K562 (cell line): ENCODE measurements at regions of chr7 and their contacts with region 1.

Region 1: DNA sequence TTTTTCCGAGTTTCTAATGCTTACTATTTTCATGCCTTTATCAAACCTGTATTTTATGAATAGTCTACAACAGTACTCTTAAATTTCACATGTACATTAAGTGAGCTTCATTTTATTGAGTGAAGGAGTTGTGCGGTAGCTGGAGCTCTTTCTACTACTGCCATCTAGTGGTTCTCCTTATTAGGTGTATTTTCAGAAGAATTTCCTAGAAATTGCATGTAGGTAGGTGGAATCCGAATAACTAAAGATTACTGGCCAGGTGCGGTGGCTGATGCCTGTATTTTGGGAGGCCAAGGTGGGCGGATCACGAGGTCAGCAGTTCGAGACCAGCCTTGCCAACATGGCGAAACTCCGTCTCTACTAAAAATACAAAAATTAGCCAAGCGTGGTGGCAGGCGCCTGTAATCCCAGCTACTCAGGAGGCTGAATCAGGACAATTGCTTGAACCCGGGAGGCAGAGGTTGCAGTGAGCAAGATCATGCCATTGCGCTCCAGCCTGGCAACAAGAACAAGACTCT is 38.3 kb downstream of the LRRC72 start:
- DNase-seq: peak; percentile 47 to 71 (median 58)
- ATAC-seq: peak; percentile 84
- H3K4me3 ChIP-seq: no peak overlapping the region
- H3K27ac ChIP-seq: no peak overlapping the region
- H3K4me1 ChIP-seq: no peaks in the 10 kb centered on the region; a peak in 2 of 5 replicates
- H3K27me3 ChIP-seq: no peaks in the 10 kb centered on the region
- CTCF ChIP-seq: peak; percentile 62 to 86 (median 68); a peak in 5 of 6 replicates
- EP300 ChIP-seq: no peak
- POLR2A ChIP-seq: no peak
- RAD21 ChIP-seq: peak; percentile 94 to 98

Region 2: DNA sequence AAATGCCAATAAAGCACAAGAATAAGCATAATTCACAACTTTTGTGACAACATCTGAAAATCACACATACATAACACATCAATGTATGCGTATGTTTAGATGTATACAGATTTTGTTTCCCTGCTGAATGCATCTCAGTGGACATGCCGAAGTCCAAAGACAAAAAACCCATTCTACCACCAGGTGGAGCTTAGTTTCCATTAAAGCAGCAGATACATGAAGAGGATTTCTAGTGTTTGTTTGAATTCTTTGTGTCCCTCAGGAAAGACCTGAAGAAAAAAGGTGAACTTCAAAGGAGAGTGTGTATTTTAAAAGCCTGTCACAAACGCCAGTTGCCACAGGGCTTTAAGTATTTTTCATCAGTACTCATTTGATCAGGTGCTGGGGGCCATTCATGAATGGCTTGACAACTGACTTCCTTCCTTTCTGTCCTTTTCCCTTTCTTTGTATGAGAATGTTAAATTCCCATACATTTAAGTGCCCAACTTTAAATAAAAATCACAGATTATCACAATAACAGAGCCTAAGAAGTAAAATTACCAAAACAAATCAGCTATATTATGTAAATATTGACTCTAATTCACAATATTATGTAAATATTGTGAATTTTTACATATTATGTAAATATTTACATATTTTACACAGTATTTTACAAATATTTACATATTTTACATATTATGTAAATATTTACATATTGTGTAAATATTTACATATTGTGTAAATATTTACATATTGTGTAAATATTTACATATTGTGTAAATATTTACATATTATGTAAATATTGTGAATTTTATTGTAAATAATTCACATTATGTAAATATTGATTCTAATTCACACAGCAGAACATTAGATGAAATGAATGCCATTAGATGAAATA is 486.7 kb before region 1 on chr7:
- CTCF ChIA-PET with region 1: interaction called, 15 read pairs
- POLR2A ChIA-PET with region 1: no interaction called
- in situ Hi-C with region 1: loop called (anchors 25 kb)
- intact Hi-C with region 1: loop called (anchors 1 kb)
- DNase-seq: peak; percentile 35 to 83 (median 40)
- ATAC-seq: peak; percentile 94
- H3K4me3 ChIP-seq: no peak overlapping the region
- H3K27ac ChIP-seq: no peak overlapping the region
- H3K4me1 ChIP-seq: no peaks in the 10 kb centered on the region; a peak in 1 of 5 replicates
- H3K27me3 ChIP-seq: no peaks in the 10 kb centered on the region
- CTCF ChIP-seq: peak; percentile 60 to 77 (median 74); a peak in 5 of 6 replicates
- EP300 ChIP-seq: no peak
- POLR2A ChIP-seq: no peak
- RAD21 ChIP-seq: peak; percentile 92 to 95

Region 3: DNA sequence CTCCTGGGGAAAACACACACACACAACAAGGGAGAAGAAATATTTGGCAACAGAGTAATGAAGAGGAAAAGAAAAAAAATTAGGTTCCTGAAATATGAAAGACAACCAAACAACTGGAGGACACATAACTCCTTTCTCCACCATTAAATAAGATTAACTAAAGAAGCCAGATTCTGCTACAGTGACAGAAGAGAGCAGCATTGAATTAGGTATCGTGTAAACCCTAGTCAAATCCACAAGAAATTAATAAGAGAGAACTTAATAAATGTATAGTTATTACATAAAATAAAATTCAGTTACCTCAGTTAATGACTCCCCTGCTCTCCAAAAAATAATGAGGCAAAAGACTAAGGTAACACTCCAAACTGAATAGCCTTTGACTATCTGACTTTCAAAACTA is 450.3 kb before region 1 on chr7:
- CTCF ChIA-PET with region 1: interaction called, 10 read pairs
- POLR2A ChIA-PET with region 1: no interaction called
- in situ Hi-C with region 1: no loop called
- intact Hi-C with region 1: loop called (anchors 1 kb)
- DNase-seq: peak in 2 of 4 experiments; percentile 23 to 58
- ATAC-seq: peak; percentile 83
- H3K4me3 ChIP-seq: no peak overlapping the region
- H3K27ac ChIP-seq: no peak overlapping the region; the same call in 2 of the 3 replicates
- H3K4me1 ChIP-seq: no peaks in the 10 kb centered on the region
- H3K27me3 ChIP-seq: no peaks in the 10 kb centered on the region
- CTCF ChIP-seq: peak in 2 of 3 experiments; percentile 42 to 60; a peak in 3 of 6 replicates
- EP300 ChIP-seq: no peak
- POLR2A ChIP-seq: no peak
- RAD21 ChIP-seq: peak; percentile 51 to 78

Region 4: DNA sequence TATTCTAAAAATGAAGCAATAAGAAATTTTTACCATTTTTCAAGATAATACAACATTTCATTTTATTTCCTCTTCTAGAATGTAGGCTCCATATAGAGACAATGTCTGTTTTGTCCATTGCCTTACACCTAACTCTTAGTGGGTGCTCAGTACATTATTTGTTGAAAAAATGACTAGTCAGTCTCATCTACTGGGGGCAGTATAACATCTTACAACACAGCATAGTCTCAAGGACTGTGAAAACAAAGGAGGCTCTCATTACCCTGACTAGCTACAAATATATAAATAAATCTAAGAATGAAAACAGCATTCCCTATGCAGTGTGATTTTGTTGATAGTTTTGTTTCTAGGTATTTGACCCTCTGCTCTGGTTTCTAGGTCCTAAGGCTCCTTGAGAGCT is 155.2 kb before region 1 on chr7:
- CTCF ChIA-PET with region 1: no interaction called
- POLR2A ChIA-PET with region 1: interaction called, 3 read pairs
- in situ Hi-C with region 1: no loop called
- intact Hi-C with region 1: loop called (anchors 1 kb)
- DNase-seq: no peak
- ATAC-seq: peak; percentile 85
- H3K4me3 ChIP-seq: no peak overlapping the region
- H3K27ac ChIP-seq: no peak overlapping the region
- H3K4me1 ChIP-seq: peaks cover 0 to 5% of the 10 kb centered on the region in 2 experiments; a peak in 4 of 5 replicates
- H3K27me3 ChIP-seq: no peaks in the 10 kb centered on the region
- CTCF ChIP-seq: peak; percentile 12 to 45 (median 24); a peak in 2 of 6 replicates
- EP300 ChIP-seq: no peak
- POLR2A ChIP-seq: no peak
- RAD21 ChIP-seq: peak in 1 of 2 experiments; percentile 64; a peak in 2 of 4 replicates

Region 5: DNA sequence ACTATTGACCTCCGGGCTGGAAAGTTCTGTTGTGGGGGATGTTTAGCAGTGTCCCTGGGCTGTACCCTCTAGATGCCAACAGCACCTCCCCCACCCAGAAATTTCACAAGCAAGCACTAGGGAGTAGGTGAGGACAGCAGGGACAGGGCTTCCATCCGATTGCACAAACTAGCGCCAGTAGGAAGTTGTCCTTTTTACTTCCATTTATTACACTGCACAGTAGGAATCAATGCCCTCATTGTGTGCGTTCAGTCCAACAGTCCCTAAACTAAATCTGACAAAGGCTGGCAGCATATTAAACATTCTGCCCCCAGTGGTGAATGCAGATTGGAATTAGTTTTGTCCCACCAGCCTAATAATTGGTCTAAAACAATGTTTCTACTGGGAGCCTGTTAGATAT is 93.0 kb before region 1 on chr7:
- CTCF ChIA-PET with region 1: no interaction called
- POLR2A ChIA-PET with region 1: no interaction called
- in situ Hi-C with region 1: no loop called
- intact Hi-C with region 1: no loop called
- DNase-seq: no peak
- ATAC-seq: no peak; the same call in 2 of the 3 replicates
- H3K4me3 ChIP-seq: no peak overlapping the region
- H3K27ac ChIP-seq: no peak overlapping the region
- H3K4me1 ChIP-seq: no peaks in the 10 kb centered on the region; a peak in 1 of 5 replicates
- H3K27me3 ChIP-seq: no peaks in the 10 kb centered on the region
- CTCF ChIP-seq: no peak
- EP300 ChIP-seq: no peak
- POLR2A ChIP-seq: no peak
- RAD21 ChIP-seq: no peak

Region 6: GRCh38 chr7:16951483-16952080 is 386.6 kb after region 1 on chr7:
- CTCF ChIA-PET with region 1: no interaction called
- POLR2A ChIA-PET with region 1: no interaction called
- in situ Hi-C with region 1: no loop called
- intact Hi-C with region 1: no loop called
- DNase-seq: no peak
- ATAC-seq: no peak
- H3K4me3 ChIP-seq: no peak overlapping the region
- H3K27ac ChIP-seq: no peak overlapping the region
- H3K4me1 ChIP-seq: no peaks in the 10 kb centered on the region
- H3K27me3 ChIP-seq: no peaks in the 10 kb centered on the region
- CTCF ChIP-seq: no peak
- EP300 ChIP-seq: no peak
- POLR2A ChIP-seq: no peak
- RAD21 ChIP-seq: no peak